ENCODE measurements at regions of chr1 and their contacts with region 1.

Region 1: DNA sequence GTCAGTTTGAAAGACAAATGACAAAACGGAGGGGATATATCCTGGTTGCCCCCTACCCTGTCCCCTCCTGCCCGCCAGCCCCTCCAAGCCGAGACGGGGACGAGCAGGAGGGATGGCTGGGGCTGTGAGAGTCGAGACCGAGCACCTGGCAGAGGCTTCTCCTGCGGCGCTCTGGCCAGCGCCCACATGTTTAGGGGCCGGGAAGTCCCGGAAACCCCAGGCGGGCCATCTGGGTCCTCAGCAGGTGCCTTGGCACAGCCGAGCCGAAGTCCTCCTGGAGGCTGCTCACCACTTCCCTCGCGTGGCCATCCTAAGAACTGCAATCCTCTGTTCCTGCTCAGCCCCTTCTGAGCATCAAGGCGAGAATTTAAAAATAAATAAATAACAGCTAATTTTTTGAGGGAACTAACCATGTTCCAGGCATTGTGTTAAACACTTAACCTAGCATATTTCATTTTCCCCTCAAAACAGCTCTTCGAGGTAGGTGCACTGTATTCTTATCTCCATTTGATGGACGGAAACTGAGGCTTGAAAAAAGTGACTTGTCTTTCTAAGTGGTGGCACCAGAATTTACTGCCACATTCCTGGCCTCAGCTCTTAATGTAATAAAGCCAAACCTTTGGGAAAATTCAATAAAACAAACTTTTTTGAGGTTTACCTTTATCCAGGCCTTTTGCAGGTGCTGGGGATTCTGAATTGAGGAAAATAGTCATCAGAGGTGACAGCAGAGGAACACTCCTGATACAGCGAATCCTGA is 3.5 kb upstream of the RIMS3 start:
- DNase-seq: peak; percentile 73 to 94 (median 87)

Region 2: GRCh38 chr1:40612345-40612831 is 56.6 kb before region 1 on chr1:
- intact Hi-C with region 1: loop called (anchors 1 kb)
- DNase-seq: peak in 41 of 42 donors; percentile 24 to 88 (median 73)